Testis (tissue), 5 donors: ENCODE measurements at regions of chr12 and their contacts with region 1.

Region 1: GRCh38 chr12:113462117-113462774 is 9.4 kb downstream of the LHX5 start:
- DNase-seq: peak; percentile 91
- H3K4me3 ChIP-seq: peak overlapping the region in 1 of 2 donors; percentile 36
- H3K27ac ChIP-seq: no peak overlapping the region
- H3K4me1 ChIP-seq: peaks cover 27% of the 10 kb centered on the region
- H3K27me3 ChIP-seq: peaks cover 6% of the 10 kb centered on the region
- CTCF ChIP-seq: peak; percentile 63 to 71 (median 69)
- POLR2A ChIP-seq: no peak

Region 2: GRCh38 chr12:113512568-113512967 is 50.3 kb after region 1 on chr12:
- intact Hi-C with region 1: no loop called
- DNase-seq: no peak
- H3K4me3 ChIP-seq: no peak overlapping the region
- H3K27ac ChIP-seq: no peak overlapping the region
- H3K4me1 ChIP-seq: no peaks in the 10 kb centered on the region
- H3K27me3 ChIP-seq: no peaks in the 10 kb centered on the region
- CTCF ChIP-seq: no peak
- POLR2A ChIP-seq: no peak

Region 3: DNA sequence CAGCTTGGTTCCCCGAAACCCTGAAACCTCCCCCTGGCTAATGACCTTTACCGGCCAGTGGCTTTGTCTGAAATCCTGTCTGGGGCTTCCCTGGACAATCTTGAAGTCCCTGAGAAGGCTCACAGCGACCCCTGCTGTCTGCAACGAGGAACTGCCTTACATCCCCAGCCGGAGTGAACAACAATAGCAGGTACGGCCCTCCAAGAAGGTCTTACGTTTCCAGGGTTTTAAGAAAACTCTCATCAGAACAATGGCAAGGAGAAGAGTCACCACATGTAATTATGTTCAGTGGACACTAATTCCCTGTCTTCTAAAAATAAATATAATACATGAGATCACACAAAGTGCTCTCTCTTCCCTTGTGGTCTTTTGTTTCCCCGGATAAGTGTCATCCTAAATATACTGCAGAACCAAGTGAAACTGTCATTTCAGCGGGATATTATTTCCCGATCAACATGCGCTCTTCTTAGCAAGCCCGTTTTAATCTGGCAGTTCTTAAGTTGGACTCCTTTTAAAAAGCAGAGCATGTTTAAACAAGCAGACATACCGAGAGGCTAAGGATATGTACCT is 450.6 kb after region 1 on chr12:
- intact Hi-C with region 1: loop called (anchors 10 kb)
- DNase-seq: peak; percentile 86
- H3K4me3 ChIP-seq: no peak overlapping the region
- H3K27ac ChIP-seq: no peak overlapping the region
- H3K4me1 ChIP-seq: no peaks in the 10 kb centered on the region
- H3K27me3 ChIP-seq: no peaks in the 10 kb centered on the region
- CTCF ChIP-seq: peak; percentile 79 to 90 (median 81)
- POLR2A ChIP-seq: no peak